B cell (primary cell): ENCODE measurements at regions of chr7 and their contacts with region 1.

Region 1: DNA sequence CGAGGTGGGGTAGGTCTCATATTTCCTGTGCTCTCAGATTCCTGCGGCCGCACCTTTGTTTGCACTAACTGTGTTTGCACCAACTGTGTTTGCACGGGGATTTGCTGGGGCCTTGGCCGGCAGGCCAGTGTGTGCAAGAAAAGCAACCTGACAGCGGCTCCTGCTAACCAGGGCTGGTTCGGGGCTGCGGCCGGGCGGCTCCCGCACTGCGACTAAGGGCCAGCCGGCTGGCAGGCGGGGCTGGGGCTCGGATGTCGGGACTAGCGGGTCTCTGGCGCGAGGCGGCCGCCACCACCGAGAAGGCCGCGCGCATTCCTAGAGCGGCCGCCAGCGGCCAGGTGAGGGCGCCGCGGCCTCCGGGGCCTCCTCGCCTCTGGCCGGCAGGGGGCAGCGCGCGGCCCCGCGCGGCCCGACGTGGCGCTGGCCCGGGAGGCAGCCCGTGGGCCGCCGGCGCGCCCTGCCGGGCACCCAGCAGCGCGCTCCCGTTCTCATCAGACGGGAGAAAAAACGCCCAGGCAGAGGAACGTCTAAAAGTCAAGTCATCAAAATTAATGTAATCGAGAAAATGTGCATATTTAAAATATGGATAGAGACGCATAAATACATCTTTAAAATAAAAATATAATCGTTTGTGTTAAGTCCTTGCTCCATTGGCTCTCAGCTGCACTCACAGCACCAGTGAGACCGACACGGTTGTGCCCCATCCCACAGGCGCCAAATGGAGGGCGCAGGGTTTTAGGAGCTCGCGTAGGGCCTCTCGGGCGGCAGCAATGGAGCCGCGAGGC is 38.5 kb downstream of the ZNF777 start:
- DNase-seq: peak; percentile 89
- ATAC-seq: peak; percentile 98
- H3K4me3 ChIP-seq: peak overlapping the region; percentile 58 to 71 (median 60)
- H3K4me3 Mint-ChIP-seq: peak overlapping the region; percentile 83
- H3K27ac ChIP-seq: peak overlapping the region; percentile 20 to 73
- H3K27ac Mint-ChIP-seq: peak overlapping the region; percentile 81
- H3K4me1 ChIP-seq: peaks cover 10 to 12% of the 10 kb centered on the region in 2 donors
- H3K4me1 Mint-ChIP-seq: peaks cover 8% of the 10 kb centered on the region
- H3K27me3 ChIP-seq: no peaks in the 10 kb centered on the region
- H3K27me3 Mint-ChIP-seq: no peaks in the 10 kb centered on the region
- CTCF ChIP-seq: peak; percentile 63

Region 2: DNA sequence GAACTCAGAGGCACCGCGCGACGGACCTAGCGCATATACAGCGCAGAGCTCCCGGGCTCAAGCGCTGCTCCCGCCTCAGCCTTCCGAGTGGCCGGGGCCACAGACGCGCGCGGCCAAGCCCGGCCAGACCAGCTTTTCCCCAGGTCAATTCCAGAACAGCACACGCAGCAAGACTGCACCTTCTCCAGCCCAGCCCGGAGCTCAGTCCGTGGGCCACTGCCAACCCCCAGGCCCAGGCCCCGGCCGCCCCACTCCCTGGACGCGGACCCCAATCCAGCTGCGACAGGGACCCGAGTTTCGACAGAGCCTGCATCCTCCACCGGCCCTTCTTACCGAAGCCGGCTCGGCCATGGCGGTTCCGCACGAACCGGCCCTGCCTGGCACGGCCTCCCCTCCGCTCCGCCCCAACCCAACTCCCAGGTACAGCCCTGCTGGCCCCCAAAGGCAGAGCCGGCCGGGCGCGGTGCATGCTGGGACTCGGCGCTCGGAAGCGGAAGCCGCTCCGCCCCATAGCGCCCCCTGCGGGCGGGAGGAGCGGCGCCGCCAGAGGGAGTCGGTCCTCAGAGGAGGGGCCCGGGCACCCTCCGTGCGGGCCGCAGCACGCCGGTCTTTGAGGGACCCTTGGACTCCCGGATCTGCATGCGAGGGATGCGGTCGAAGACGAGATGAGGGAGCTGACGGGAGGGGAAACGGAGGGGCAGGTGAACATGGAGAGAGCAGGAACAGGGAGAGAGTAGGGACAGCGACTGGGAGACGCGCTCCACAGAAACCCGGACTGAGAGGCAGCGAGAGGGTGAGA is 296.3 kb before region 1 on chr7 and contains the start of gene ZNF425:
- CTCF ChIA-PET with region 1: interaction called, 3 read pairs
- POLR2A ChIA-PET with region 1: no interaction called
- intact Hi-C with region 1: loop called (anchors 1 kb)
- DNase-seq: peak; percentile 95
- ATAC-seq: peak; percentile 84
- H3K4me3 ChIP-seq: peak within 1 kb of the TSS; percentile 64 to 98 (median 88)
- H3K4me3 Mint-ChIP-seq: peak within 1 kb of the TSS; percentile 97
- H3K27ac ChIP-seq: peak within 1 kb of the TSS; percentile 85 to 89
- H3K27ac Mint-ChIP-seq: peak within 1 kb of the TSS; percentile 99
- H3K4me1 ChIP-seq: peaks cover 12 to 14% of the 10 kb centered on the region in 2 donors
- H3K4me1 Mint-ChIP-seq: peaks cover 22% of the 10 kb centered on the region
- H3K27me3 ChIP-seq: no peaks in the 10 kb centered on the region
- H3K27me3 Mint-ChIP-seq: no peaks in the 10 kb centered on the region
- CTCF ChIP-seq: peak; percentile 89
- total RNA-seq, gene ZNF425: 2.8 and 3.3 TPM in 2 replicates

Region 3: DNA sequence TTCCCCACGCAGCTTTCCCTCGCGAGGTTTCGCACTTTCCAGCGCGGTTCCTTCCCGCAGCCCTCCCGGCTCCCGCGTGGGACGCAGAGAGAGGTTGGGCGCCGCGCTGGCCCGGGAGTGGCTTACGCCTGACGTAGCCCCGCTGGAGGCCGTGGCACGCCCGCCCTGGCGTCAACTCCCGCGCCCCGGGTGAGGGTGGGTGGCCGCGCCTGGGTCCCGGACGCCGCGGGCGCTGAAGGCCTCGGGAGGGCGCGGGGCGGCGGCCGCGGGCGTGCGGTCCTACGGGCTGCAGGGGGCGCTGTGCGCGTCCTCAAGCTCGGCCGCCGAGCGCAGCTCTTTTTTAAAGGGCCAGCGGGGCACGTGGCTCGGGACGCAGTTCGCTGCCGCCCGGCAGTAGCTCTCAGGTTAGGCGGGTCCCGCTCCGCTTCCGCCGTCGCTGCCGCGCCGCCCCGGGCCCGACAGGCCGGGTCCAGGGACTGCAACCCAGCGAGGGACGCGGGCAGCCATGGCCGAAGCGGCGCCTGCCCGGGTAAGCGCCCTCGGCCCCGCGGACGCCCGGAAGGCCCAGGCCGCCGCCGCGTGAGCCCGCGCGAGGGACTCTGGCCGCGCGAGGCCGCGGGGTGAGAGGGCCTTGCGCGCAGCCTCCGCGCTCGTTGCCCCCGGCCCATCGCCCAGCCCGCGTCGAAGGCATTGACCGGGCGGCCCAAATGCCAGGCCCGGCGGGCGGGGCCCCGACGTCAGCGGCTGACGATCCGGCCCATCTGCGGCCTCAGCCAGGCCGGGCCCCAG is 160.3 kb before region 1 on chr7 and contains the start of gene ZNF783:
- CTCF ChIA-PET with region 1: interaction called, 3 read pairs
- POLR2A ChIA-PET with region 1: no interaction called
- intact Hi-C with region 1: loop called (anchors 1 kb)
- DNase-seq: peak; percentile 94
- ATAC-seq: peak; percentile 93
- H3K4me3 ChIP-seq: peak within 1 kb of the TSS in 4 of 5 experiments; percentile 64 to 75 (median 68)
- H3K4me3 Mint-ChIP-seq: peak within 1 kb of the TSS; percentile 94
- H3K27ac ChIP-seq: peak within 1 kb of the TSS; percentile 69 to 76
- H3K27ac Mint-ChIP-seq: peak within 1 kb of the TSS; percentile 92
- H3K4me1 ChIP-seq: peaks cover 13 to 17% of the 10 kb centered on the region in 2 donors
- H3K4me1 Mint-ChIP-seq: peaks cover 21% of the 10 kb centered on the region
- H3K27me3 ChIP-seq: no peaks in the 10 kb centered on the region
- H3K27me3 Mint-ChIP-seq: no peaks in the 10 kb centered on the region
- CTCF ChIP-seq: peak; percentile 86
- total RNA-seq, gene ZNF783: 43.8 and 44.8 TPM in 2 replicates

Region 4: DNA sequence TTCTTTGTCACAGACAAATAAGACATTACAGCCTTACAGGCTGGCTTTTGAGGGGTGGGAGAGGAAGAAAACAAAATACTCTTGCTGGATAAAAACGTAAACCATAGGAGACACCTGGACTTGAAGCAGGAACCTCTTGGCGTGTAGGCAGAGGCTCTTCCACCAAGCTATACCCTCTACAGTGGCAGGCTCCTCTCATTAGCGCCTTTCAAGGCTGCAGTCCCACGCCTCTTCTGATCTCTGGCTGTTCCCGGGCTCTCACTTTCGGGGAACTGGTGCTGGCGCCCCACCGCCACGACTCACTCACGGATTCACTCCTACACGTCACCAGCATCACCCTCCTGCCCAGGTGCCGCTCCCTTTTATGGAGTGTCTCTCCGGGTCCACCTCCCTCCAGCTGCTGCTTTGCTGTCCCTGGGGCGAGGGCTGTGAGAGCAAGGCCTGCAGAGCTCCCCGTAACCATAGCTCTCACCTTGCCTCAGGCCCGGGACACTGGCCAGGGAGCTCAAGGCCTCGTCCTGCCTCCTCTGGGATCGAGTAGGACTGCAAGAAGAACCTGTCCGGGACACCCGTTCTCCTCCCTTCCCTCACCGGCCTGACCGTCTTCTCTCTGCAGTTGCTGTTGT is 24.0 kb before region 1 on chr7:
- CTCF ChIA-PET with region 1: no interaction called
- POLR2A ChIA-PET with region 1: no interaction called
- intact Hi-C with region 1: no loop called
- DNase-seq: no peak
- ATAC-seq: no peak
- H3K4me3 ChIP-seq: no peak overlapping the region
- H3K4me3 Mint-ChIP-seq: no peak overlapping the region
- H3K27ac ChIP-seq: no peak overlapping the region
- H3K27ac Mint-ChIP-seq: no peak overlapping the region
- H3K4me1 ChIP-seq: no peaks in the 10 kb centered on the region
- H3K4me1 Mint-ChIP-seq: no peaks in the 10 kb centered on the region
- H3K27me3 ChIP-seq: peaks cover 0 to 10% (median 0%) of the 10 kb centered on the region in 4 experiments
- H3K27me3 Mint-ChIP-seq: peaks cover 43% of the 10 kb centered on the region
- CTCF ChIP-seq: no peak

Region 5: GRCh38 chr7:149460493-149461277 is 38.4 kb after region 1 on chr7 and contains the start of gene ZNF777:
- CTCF ChIA-PET with region 1: interaction called, 41 read pairs
- POLR2A ChIA-PET with region 1: interaction called, 5 read pairs
- intact Hi-C with region 1: loop called (anchors 1 kb)
- DNase-seq: peak; percentile 87
- ATAC-seq: peak; percentile 97
- H3K4me3 ChIP-seq: peak within 1 kb of the TSS; percentile 25 to 94 (median 70)
- H3K4me3 Mint-ChIP-seq: peak within 1 kb of the TSS; percentile 92
- H3K27ac ChIP-seq: peak within 1 kb of the TSS in 1 of 2 donors; percentile 65
- H3K27ac Mint-ChIP-seq: peak within 1 kb of the TSS; percentile 89
- H3K4me1 ChIP-seq: peaks cover 14% of the 10 kb centered on the region in 2 donors
- H3K4me1 Mint-ChIP-seq: peaks cover 31% of the 10 kb centered on the region
- H3K27me3 ChIP-seq: peaks cover 0 to 11% (median 2%) of the 10 kb centered on the region in 4 experiments
- H3K27me3 Mint-ChIP-seq: peaks cover 14% of the 10 kb centered on the region
- CTCF ChIP-seq: peak; percentile 43
- total RNA-seq, gene ZNF777: 14.9 and 16.0 TPM in 2 replicates

Region 6: DNA sequence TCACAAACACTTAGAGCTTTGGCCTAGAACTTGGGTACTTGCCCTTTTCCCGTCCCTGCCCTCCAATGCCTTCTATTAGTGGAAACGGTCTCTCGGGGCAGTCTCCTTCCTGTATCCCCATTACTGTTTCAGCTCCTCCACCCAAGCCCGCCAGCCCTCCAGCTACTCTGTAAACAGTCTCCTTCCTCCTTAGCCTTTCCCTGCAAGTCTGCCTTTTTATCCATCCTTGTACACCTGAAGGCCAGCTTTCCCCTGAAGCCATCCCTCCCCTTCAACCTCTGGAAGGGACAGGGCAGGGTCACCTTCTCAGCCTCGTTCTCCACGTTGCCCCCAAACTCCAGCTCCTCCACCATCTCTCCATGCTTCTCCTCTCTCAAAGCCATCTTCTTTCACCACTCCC is 183.4 kb after region 1 on chr7:
- CTCF ChIA-PET with region 1: no interaction called
- POLR2A ChIA-PET with region 1: no interaction called
- intact Hi-C with region 1: loop called (anchors 5 kb)
- DNase-seq: no peak
- ATAC-seq: no peak
- H3K4me3 ChIP-seq: no peak overlapping the region
- H3K4me3 Mint-ChIP-seq: no peak overlapping the region
- H3K27ac ChIP-seq: no peak overlapping the region
- H3K27ac Mint-ChIP-seq: peak overlapping the region; percentile 59
- H3K4me1 ChIP-seq: peaks cover 7 to 9% of the 10 kb centered on the region in 2 donors
- H3K4me1 Mint-ChIP-seq: peaks cover 9% of the 10 kb centered on the region
- H3K27me3 ChIP-seq: no peaks in the 10 kb centered on the region
- H3K27me3 Mint-ChIP-seq: no peaks in the 10 kb centered on the region
- CTCF ChIP-seq: no peak